CD14-positive monocyte (primary cell): ENCODE measurements at regions of chr1 and their contacts with region 1.

Region 1: DNA sequence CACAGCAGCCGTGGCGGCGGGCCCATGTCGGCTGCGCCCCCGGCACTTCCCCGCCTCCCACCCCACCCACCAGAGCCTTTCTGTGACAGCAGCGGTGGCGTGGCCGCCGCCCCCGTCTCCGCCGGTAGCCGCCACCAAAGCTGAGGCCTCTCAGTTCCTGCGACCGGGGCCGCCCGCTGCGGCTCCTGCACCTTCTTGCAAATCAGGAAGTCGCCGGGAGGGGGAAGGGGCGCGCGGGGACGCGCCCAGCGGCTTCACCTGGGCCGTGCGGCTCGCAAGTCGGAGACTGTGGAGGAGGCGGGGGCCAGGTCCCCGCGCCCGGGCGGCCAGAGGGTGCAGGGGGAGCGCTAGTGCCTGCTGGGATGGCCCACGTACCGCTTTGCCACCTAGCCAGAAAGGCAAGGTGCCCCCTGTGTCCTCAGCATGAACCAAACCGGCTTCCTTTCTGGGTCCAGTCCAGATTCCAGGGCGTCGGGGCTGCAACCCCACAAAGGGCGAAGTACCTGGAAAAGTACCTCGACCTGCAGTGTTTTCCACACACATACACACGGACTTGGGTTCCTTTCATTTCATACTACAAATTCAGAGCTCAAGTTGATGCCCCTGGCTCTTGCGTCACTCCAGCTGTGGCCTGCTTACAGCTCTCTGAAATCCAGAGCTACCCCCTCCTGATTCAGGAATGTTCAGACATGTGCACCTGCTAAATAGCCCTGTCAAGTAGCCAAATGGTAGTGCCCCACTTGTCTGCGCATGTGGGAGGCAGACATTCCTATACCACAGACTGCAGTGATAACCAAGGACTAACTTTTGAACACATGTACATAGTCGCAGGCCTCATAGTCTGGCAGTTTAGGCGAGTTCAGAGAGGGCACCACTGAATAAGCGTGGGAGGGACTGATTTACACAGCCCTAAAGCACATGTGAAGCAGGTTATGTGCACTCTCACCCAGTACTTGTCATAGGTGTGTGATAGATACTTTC is at the start of gene DENND1B:
- DNase-seq: peak; percentile 69 to 78 (median 73)
- H3K4me3 ChIP-seq: peak within 1 kb of the TSS; percentile 59 to 96 (median 82)
- H3K4me3 Mint-ChIP-seq: peak within 1 kb of the TSS; percentile 84 to 94
- H3K27ac ChIP-seq: peak within 1 kb of the TSS; percentile 37 to 87
- H3K27ac Mint-ChIP-seq: peak within 1 kb of the TSS; percentile 82 to 95 (median 91)
- H3K4me1 ChIP-seq: peaks cover 34 to 73% of the 10 kb centered on the region in 2 donors
- H3K4me1 Mint-ChIP-seq: peaks cover 68% of the 10 kb centered on the region
- H3K27me3 ChIP-seq: no peaks in the 10 kb centered on the region
- H3K27me3 Mint-ChIP-seq: no peaks in the 10 kb centered on the region
- CTCF ChIP-seq: peak; percentile 10
- polyA plus RNA-seq, gene DENND1B: 3.0 to 8.2 (median 5.7) TPM

Region 2: GRCh38 chr1:197675583-197676208 is 99.9 kb before region 1 on chr1:
- intact Hi-C with region 1: no loop called
- DNase-seq: peak in 2 of 3 donors; percentile 3 to 16
- H3K4me3 ChIP-seq: peak overlapping the region; percentile 23 to 70 (median 39)
- H3K4me3 Mint-ChIP-seq: peak overlapping the region; percentile 80 to 88
- H3K27ac ChIP-seq: peak overlapping the region in 1 of 2 donors; percentile 24
- H3K27ac Mint-ChIP-seq: peak overlapping the region in 5 of 7 donors; percentile 7 to 85 (median 70)
- H3K4me1 ChIP-seq: peaks cover 0 to 4% of the 10 kb centered on the region in 2 donors
- H3K4me1 Mint-ChIP-seq: peaks cover 6% of the 10 kb centered on the region
- H3K27me3 ChIP-seq: no peaks in the 10 kb centered on the region
- H3K27me3 Mint-ChIP-seq: no peaks in the 10 kb centered on the region
- CTCF ChIP-seq: no peak

Region 3: DNA sequence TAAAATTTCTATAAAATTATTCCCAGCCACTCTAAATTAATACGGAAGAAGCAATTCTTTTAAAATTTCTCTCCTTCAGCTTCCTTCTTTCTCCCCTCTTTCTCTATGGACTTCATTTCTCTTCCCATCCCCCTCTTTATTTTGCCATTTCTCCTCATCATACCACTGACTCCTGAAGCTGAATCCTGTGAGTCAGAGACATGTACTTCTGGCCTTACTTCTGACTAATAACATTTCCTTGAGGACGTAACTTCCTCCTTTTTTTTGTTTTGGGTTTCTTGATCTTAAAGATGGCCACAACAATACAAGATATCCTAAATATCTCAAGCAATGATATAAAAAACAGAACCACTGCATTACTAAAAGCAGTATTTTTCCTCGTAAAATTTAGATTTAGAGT is 63.3 kb after region 1 on chr1:
- intact Hi-C with region 1: loop called (anchors 5 kb)
- DNase-seq: peak; percentile 74 to 92 (median 83)
- H3K4me3 ChIP-seq: no peak overlapping the region
- H3K4me3 Mint-ChIP-seq: no peak overlapping the region
- H3K27ac ChIP-seq: peak overlapping the region in 1 of 2 donors; percentile 53
- H3K27ac Mint-ChIP-seq: peak overlapping the region; percentile 55 to 94 (median 84)
- H3K4me1 ChIP-seq: peaks cover 20 to 25% of the 10 kb centered on the region in 2 donors
- H3K4me1 Mint-ChIP-seq: peaks cover 31% of the 10 kb centered on the region
- H3K27me3 ChIP-seq: no peaks in the 10 kb centered on the region
- H3K27me3 Mint-ChIP-seq: no peaks in the 10 kb centered on the region
- CTCF ChIP-seq: no peak

Region 4: GRCh38 chr1:198001776-198002408 is 226.3 kb after region 1 on chr1:
- intact Hi-C with region 1: no loop called
- DNase-seq: no peak
- H3K4me3 ChIP-seq: no peak overlapping the region
- H3K4me3 Mint-ChIP-seq: no peak overlapping the region
- H3K27ac ChIP-seq: no peak overlapping the region
- H3K27ac Mint-ChIP-seq: no peak overlapping the region
- H3K4me1 ChIP-seq: no peaks in the 10 kb centered on the region
- H3K4me1 Mint-ChIP-seq: no peaks in the 10 kb centered on the region
- H3K27me3 ChIP-seq: no peaks in the 10 kb centered on the region
- H3K27me3 Mint-ChIP-seq: no peaks in the 10 kb centered on the region
- CTCF ChIP-seq: no peak